ENCODE measurements at regions of chr9 and their contacts with region 1.

Region 1: GRCh38 chr9:127541877-127542276 is 70.2 kb upstream of the STXBP1 start:
- DNase-seq: peak; percentile 63 to 96
- H3K4me3 ChIP-seq: peak overlapping the region in 1 of 2 donors; percentile 18
- H3K27ac ChIP-seq: peak overlapping the region; percentile 79 to 82
- H3K4me1 ChIP-seq: peaks cover 38 to 58% of the 10 kb centered on the region in 2 donors
- H3K27me3 ChIP-seq: no peaks in the 10 kb centered on the region
- CTCF ChIP-seq: peak in 1 of 3 experiments; percentile 5

Region 2: DNA sequence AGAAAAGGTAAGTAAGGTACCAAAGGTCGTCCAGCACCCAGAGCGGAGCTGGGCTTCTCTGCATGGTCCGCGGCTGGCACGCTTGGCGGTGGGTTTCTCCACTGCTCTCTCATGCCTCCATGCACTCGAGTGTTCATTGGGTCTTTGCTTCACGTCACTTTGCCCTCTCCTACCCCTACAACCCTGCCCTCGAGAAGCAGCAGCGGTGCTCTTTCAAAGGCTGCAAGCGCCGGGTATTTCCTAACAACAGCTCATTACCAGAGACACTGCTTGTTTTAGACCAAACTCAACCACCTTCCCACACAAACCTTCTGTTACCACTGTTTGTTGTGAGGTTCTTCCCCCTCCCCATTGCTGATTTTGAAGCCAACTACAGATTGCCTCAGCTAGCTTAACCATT is 703.0 kb before region 1 on chr9:
- intact Hi-C with region 1: no loop called
- DNase-seq: no peak
- H3K4me3 ChIP-seq: no peak overlapping the region
- H3K27ac ChIP-seq: no peak overlapping the region
- H3K4me1 ChIP-seq: no peaks in the 10 kb centered on the region
- H3K27me3 ChIP-seq: no peaks in the 10 kb centered on the region
- CTCF ChIP-seq: no peak

Region 3: DNA sequence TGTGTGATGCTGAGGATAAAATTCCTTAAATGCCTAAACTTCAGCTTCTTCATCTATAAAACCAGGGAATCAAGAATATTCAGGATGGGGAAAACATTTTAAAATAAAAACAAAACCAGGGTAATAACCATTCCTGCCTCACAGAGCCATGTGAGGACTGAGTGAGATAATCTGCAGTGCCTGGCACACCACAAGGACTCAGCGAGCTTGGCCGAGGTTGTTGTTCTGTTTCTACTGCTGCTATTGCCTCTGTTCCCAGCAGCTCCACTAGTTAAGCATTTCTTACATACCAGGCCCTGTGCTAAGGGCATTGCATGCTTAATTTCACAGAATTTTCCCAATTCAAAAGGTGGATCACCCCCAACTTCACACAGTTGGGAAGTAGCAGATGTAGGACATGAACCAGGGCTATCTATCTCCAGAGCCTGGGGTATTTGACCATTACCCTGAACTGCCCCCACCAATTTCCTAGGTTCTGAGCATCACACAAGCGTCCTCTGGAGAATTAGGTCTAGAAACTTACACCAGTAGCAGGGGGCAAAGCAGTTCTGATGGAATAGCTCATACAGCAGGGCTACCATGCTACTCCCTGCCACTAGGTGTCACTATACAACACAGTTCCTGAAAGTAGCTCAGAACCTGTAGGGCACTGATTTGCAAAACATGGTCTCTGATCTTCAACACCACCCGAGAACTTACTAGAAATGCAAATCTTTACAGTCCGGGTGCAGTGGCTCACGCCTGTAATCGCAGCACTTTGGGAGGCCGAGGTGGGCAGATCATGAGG is 16.3 kb before region 1 on chr9:
- intact Hi-C with region 1: loop called (anchors 1 kb)
- DNase-seq: no peak
- H3K4me3 ChIP-seq: no peak overlapping the region
- H3K27ac ChIP-seq: peak overlapping the region; percentile 58 to 63
- H3K4me1 ChIP-seq: peaks cover 14 to 39% of the 10 kb centered on the region in 2 donors
- H3K27me3 ChIP-seq: no peaks in the 10 kb centered on the region
- CTCF ChIP-seq: peak; percentile 30 to 42 (median 42)

Region 4: DNA sequence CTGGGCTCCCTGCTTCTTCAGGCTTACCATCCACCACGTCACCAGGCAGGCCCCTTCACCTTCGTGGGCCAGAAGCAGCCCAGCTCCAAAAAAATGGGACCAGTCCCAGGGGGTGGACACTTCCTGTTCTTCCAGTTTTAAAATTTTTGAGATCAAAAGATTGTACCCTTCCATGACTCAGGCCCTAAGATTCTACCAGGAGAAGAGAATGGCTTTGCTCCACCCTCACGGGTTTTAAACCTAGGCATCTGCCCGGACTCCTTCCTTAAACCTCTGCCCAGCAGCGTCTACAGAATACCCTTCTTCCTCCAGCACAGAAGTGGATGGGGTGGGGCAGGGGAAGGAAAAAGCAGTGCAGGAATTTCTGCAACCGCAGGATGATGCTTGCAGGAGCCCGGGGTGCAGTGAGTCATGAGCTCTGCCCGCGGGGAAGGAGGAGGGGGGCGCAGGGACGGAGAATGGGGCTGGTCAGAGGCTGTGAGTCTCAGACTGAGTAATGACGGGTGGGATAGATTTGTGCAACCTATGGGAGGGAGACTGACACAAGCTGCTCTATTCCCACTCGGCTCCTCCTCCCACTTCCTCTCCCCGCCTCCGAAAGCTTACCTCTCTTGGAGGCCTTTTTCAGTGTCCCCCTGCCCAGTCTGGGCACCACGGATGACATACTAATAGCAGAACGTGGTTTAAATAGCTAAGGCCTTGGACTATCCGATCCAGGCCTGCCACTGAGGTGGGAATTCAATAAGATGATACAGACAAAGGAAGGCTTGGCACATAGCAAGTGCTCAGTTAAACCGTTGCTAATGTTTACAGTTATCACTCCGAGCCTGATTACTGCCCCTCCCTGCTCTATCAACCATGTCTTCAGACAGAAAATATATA is 20.0 kb after region 1 on chr9:
- intact Hi-C with region 1: loop called (anchors 1 kb)
- DNase-seq: peak; percentile 85 to 97
- H3K4me3 ChIP-seq: peak overlapping the region; percentile 1 to 17
- H3K27ac ChIP-seq: peak overlapping the region; percentile 85 to 90
- H3K4me1 ChIP-seq: peaks cover 30 to 54% of the 10 kb centered on the region in 2 donors
- H3K27me3 ChIP-seq: no peaks in the 10 kb centered on the region
- CTCF ChIP-seq: no peak

Region 5: DNA sequence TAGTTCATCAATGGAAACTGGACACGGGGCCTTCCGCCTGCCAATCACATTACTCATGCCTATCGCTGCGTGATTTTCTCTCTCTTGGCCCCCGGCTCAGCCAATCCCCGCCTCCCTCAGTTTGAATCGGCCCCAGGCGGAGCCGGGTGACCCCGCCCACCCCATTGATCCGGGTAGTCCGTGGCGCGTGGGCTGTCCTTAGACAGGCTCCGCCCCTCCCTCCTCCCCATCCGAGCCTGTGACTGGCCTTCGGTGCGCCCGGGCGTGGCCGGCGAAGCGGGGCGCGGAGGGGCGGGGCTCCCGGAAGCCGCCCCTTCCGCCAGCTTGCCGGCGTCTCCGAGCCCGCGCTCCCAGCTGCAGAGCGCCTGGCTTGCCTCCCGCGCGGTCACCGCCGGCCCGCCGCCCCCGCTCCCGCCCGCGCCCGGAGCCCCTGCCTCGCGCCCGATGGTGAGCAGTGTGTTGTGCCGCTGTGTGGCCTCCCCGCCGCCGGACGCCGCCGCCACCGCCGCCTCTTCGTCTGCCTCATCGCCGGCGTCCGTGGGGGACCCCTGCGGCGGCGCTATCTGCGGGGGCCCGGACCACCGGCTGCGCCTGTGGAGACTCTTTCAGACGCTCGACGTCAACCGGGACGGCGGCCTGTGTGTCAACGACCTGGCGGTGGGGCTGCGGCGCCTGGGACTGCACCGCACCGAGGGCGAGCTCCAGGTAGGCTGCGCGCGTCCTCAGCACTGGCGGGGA is 526.2 kb after region 1 on chr9 and contains the start of gene SLC25A25:
- intact Hi-C with region 1: no loop called
- DNase-seq: peak; percentile 100
- H3K4me3 ChIP-seq: peak within 1 kb of the TSS; percentile 91 to 98
- H3K27ac ChIP-seq: peak within 1 kb of the TSS; percentile 95 to 99
- H3K4me1 ChIP-seq: peaks cover 22 to 39% of the 10 kb centered on the region in 2 donors
- H3K27me3 ChIP-seq: no peaks in the 10 kb centered on the region
- CTCF ChIP-seq: no peak
- total RNA-seq, gene SLC25A25: 27.4 TPM

Measured in ascending aorta (tissue), 2 donors.